Endothelial cell of umbilical vein (primary cell): ENCODE measurements at regions of chr1 and their contacts with region 1.

Region 1: DNA sequence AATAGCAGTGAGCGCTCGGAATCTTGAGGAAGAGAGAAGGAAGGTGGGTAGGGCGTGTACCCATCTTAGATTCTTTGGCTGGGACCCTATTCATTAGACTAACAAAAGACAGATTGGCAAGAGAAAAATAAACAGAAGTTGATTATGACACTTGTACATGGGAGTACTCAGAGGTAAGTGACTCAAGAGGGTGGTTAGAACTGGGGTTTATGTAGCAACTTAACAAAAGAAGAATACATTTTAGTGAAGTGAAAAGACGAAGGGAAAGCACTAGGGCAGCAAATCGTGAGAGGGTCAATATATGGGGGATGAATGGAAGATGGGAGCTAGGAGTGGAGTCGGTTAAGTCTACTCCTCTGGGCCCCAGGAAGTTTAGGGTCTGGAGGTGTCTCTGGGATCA is 25.8 kb upstream of the RCC2 start:
- DNase-seq: no peak
- H3K4me3 ChIP-seq: no peak overlapping the region
- H3K27ac ChIP-seq: no peak overlapping the region
- H3K4me1 ChIP-seq: no peaks in the 10 kb centered on the region
- H3K27me3 ChIP-seq: no peaks in the 10 kb centered on the region
- CTCF ChIP-seq: no peak
- POLR2A ChIP-seq: no peak

Region 2: GRCh38 chr1:17475729-17476128 is 10.5 kb after region 1 on chr1:
- CTCF ChIA-PET with region 1: interaction called, 22 read pairs
- POLR2A ChIA-PET with region 1: no interaction called
- dilution Hi-C with region 1: no loop called
- intact Hi-C with region 1: no loop called
- DNase-seq: no peak
- H3K4me3 ChIP-seq: no peak overlapping the region
- H3K27ac ChIP-seq: no peak overlapping the region
- H3K4me1 ChIP-seq: no peaks in the 10 kb centered on the region
- H3K27me3 ChIP-seq: peaks cover 0 to 2% of the 10 kb centered on the region in 2 experiments
- CTCF ChIP-seq: no peak
- POLR2A ChIP-seq: no peak

Region 3: GRCh38 chr1:18211764-18212163 is 746.5 kb after region 1 on chr1:
- CTCF ChIA-PET with region 1: no interaction called
- POLR2A ChIA-PET with region 1: no interaction called
- dilution Hi-C with region 1: no loop called
- intact Hi-C with region 1: no loop called
- DNase-seq: no peak
- H3K4me3 ChIP-seq: no peak overlapping the region
- H3K27ac ChIP-seq: no peak overlapping the region
- H3K4me1 ChIP-seq: no peaks in the 10 kb centered on the region
- H3K27me3 ChIP-seq: no peaks in the 10 kb centered on the region
- CTCF ChIP-seq: no peak
- POLR2A ChIP-seq: no peak

Region 4: GRCh38 chr1:18635891-18636595 is 1170.8 kb after region 1 on chr1:
- CTCF ChIA-PET with region 1: no interaction called
- POLR2A ChIA-PET with region 1: no interaction called
- dilution Hi-C with region 1: no loop called
- intact Hi-C with region 1: no loop called
- DNase-seq: no peak
- H3K4me3 ChIP-seq: no peak overlapping the region
- H3K27ac ChIP-seq: no peak overlapping the region
- H3K4me1 ChIP-seq: no peaks in the 10 kb centered on the region
- H3K27me3 ChIP-seq: peaks cover 88 to 95% of the 10 kb centered on the region in 2 experiments
- CTCF ChIP-seq: no peak
- POLR2A ChIP-seq: no peak